ENCODE measurements at regions of chr20 and their contacts with region 1.

Region 1: GRCh38 chr20:5991623-5992441 is 41.4 kb downstream of the MCM8 start:
- DNase-seq: no peak
- H3K4me3 ChIP-seq: no peak overlapping the region
- H3K27ac ChIP-seq: no peak overlapping the region
- H3K4me1 ChIP-seq: no peaks in the 10 kb centered on the region
- H3K27me3 ChIP-seq: no peaks in the 10 kb centered on the region
- CTCF ChIP-seq: no peak

Region 2: DNA sequence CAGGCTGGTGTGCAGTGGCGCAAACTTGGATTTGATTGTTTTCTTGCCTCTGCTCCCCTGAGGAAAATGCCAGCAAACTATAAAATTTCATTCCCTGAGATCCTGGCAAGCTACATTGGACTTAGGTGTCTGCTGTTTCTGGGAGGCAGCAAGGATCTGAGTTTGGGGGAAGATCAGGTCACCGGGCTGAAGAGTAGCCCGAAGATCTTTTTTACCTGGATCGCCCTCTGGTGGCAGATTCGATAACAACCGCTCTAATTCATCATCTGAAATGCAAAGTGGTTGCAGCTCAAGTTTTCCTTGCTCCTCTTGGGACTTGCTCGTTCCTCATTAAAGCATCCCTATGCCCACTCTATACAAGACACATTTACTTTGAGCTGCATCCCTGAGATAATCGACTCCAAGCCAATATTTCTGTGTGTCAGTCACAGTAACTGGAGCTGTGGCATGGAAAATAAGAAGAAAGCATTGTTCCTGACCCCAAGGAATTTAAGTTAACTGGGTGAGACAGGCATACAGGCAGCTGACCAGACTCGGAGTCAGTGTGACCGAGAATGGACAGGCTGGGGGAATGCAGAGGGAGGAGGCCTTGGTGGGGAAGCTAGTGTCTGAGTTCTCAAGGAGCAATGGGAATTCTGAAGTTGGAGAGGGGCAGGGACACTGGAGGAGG is 543.2 kb before region 1 on chr20:
- CTCF ChIA-PET with region 1: interaction called, 13 read pairs
- dilution Hi-C with region 1: no loop called
- in situ Hi-C with region 1: no loop called
- intact Hi-C with region 1: no loop called
- DNase-seq: peak; percentile 28
- H3K4me3 ChIP-seq: no peak overlapping the region
- H3K27ac ChIP-seq: no peak overlapping the region
- H3K4me1 ChIP-seq: no peaks in the 10 kb centered on the region
- H3K27me3 ChIP-seq: peaks cover 6% of the 10 kb centered on the region
- CTCF ChIP-seq: peak; percentile 67 to 68

Region 3: DNA sequence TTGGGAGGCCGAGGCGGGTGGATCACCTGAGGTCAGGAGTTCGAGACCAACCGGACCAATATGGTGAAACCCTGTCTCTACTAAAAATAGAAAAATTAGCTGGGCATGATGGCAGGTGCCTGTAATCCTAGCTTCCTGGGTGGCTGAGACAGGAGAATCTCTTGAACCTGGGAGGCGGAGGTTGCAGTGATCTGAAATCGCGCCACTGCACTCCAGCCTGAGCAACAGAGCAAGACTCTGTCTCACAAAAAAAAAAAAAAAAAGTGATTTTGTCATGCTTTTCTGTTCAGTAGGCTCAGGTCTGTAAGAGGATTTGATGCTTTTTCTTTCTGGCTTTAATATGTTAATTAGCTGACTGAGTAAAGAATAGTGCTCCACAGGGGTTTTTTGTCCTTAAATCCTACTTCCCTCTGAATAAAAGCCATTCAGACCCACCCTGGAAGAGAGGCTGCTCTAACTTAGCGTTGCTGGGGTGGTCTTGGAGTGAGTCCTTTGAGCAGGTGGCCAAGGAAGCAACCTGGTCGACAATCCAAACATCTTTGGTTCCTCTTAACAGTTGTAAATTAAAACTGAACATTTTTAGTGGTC is 22.4 kb before region 1 on chr20:
- CTCF ChIA-PET with region 1: no interaction called
- dilution Hi-C with region 1: no loop called
- in situ Hi-C with region 1: no loop called
- intact Hi-C with region 1: no loop called
- DNase-seq: no peak
- H3K4me3 ChIP-seq: no peak overlapping the region
- H3K27ac ChIP-seq: no peak overlapping the region
- H3K4me1 ChIP-seq: no peaks in the 10 kb centered on the region
- H3K27me3 ChIP-seq: no peaks in the 10 kb centered on the region
- CTCF ChIP-seq: no peak

Region 4: DNA sequence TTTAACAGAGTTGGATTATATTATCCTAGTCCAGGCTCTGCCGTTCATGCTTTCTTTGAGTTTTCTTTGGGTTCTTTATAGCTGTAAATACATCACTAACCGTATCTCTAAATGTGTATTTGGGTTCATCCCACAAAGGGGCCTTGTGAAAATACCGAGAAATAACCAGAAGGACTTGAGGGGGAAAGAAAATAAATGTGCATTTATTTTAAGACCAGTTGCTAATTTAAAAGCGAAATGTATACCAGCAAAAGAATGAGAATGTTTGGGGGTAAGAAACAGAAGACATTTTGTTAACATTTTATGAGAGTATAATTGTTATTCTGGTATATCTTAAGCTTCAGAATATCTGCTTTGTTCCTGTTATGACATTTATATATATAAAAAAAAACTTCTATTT is 23.1 kb after region 1 on chr20:
- CTCF ChIA-PET with region 1: interaction called, 28 read pairs
- dilution Hi-C with region 1: no loop called
- in situ Hi-C with region 1: no loop called
- intact Hi-C with region 1: no loop called
- DNase-seq: no peak
- H3K4me3 ChIP-seq: no peak overlapping the region
- H3K27ac ChIP-seq: no peak overlapping the region
- H3K4me1 ChIP-seq: no peaks in the 10 kb centered on the region
- H3K27me3 ChIP-seq: no peaks in the 10 kb centered on the region
- CTCF ChIP-seq: no peak

Region 5: DNA sequence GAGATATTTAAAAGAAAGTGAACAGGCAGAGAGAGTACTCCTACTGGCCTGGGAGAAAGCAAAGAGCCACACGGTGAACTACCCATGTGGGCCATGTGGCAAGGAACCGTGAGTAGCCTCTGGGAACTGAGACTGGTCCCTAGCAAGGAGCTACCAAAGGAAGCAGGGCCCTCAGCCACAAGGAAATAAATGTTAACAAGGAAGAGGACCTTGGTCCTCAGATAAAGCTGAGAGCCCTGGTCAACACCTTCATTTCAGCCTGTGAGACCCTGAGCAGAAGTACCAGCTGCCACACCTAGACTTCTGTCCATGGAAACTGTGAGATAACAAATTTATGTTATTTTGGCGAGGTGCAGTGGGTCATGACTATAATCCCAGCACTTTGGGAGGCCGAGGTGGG is 801.0 kb after region 1 on chr20:
- CTCF ChIA-PET with region 1: no interaction called
- dilution Hi-C with region 1: no loop called
- in situ Hi-C with region 1: no loop called
- intact Hi-C with region 1: no loop called
- DNase-seq: no peak
- H3K4me3 ChIP-seq: no peak overlapping the region
- H3K27ac ChIP-seq: no peak overlapping the region
- H3K4me1 ChIP-seq: no peaks in the 10 kb centered on the region
- H3K27me3 ChIP-seq: no peaks in the 10 kb centered on the region
- CTCF ChIP-seq: no peak

Measured in mammary epithelial cell (primary cell).